Activated CD8-positive, alpha-beta T cell treated with anti-CD3 and anti-CD28 coated beads for 36 hours (primary cell): ENCODE measurements at regions of chr14 and their contacts with region 1.

Region 1: DNA sequence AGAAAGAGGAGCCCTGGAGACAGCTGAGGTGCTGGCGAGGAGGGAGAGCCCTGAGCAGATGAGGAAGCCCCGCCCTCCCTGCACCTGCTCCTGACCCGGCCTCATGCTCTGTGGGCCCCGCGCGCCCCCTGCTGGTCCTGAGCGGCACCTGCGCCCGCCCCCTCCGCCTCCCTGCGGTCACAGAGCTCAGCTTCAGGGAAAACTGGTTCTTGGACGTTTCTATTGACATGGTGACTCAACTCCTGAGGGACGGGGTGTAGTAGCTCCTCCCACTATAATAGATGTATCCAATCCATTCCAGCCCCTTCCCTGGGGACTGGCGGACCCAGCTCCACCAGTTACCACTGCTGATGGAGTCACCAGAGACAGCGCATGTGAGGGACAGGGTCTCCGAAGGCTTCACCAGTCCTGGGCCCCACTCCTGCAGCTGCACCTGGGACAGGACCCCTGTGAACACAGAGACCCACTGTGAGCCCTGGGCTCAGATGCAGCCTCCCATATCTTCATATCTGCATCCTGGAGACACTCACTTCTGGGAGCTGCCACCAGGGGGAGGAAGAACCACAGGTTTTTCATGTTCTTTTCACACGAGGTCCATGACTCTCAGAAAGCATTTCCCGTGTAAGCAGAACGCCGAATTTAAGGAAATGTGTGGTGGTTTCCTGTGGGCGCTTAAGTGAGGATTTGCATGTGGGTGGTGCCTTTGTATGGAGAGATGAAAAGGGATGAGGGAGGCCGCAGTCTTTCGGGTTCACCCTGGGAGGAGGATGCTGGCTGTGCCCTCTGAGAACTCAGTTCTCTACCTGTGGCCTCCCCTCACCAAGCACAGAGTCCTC is 1346.4 kb downstream of the TMEM121 start:
- DNase-seq: peak; percentile 95
- ATAC-seq: peak; percentile 92
- H3K4me3 Mint-ChIP-seq: peak overlapping the region; percentile 30
- H3K27ac Mint-ChIP-seq: peak overlapping the region; percentile 8
- H3K4me1 Mint-ChIP-seq: peaks cover 15% of the 10 kb centered on the region
- H3K27me3 Mint-ChIP-seq: peaks cover 25% of the 10 kb centered on the region
- CTCF ChIP-seq: peak; percentile 83

Region 2: GRCh38 chr14:106790189-106791036 is 82.4 kb before region 1 on chr14:
- CTCF ChIA-PET with region 1: interaction called, 10 read pairs
- POLR2A ChIA-PET with region 1: no interaction called
- intact Hi-C with region 1: no loop called
- DNase-seq: peak; percentile 92
- ATAC-seq: peak; percentile 92
- H3K4me3 Mint-ChIP-seq: no peak overlapping the region
- H3K27ac Mint-ChIP-seq: no peak overlapping the region
- H3K4me1 Mint-ChIP-seq: peaks cover 8% of the 10 kb centered on the region
- H3K27me3 Mint-ChIP-seq: peaks cover 4% of the 10 kb centered on the region
- CTCF ChIP-seq: peak; percentile 90

Region 3: DNA sequence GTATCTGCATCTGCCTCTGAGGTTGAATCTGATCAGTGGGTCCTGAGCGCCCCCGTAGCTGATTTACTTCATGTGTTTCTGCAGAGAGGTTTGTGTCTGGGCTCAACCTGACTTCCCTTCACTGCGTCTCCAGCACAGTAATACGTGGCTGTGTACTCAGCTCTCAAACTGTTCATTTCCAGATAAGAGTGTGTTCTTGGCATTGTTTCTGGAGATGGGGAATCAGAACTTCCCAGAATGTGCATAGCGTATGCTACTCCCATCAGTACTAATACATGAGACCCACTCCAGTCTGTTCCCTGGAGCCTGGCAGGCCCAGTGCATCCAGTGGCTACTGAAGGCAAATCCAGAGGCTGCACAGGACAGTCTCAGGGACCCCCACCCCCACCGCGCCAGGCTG is 49.3 kb before region 1 on chr14:
- CTCF ChIA-PET with region 1: interaction called, 13 read pairs
- POLR2A ChIA-PET with region 1: no interaction called
- intact Hi-C with region 1: no loop called
- DNase-seq: no peak
- ATAC-seq: no peak
- H3K4me3 Mint-ChIP-seq: no peak overlapping the region
- H3K27ac Mint-ChIP-seq: no peak overlapping the region
- H3K4me1 Mint-ChIP-seq: peaks cover 1% of the 10 kb centered on the region
- H3K27me3 Mint-ChIP-seq: peaks cover 9% of the 10 kb centered on the region
- CTCF ChIP-seq: no peak

Region 4: DNA sequence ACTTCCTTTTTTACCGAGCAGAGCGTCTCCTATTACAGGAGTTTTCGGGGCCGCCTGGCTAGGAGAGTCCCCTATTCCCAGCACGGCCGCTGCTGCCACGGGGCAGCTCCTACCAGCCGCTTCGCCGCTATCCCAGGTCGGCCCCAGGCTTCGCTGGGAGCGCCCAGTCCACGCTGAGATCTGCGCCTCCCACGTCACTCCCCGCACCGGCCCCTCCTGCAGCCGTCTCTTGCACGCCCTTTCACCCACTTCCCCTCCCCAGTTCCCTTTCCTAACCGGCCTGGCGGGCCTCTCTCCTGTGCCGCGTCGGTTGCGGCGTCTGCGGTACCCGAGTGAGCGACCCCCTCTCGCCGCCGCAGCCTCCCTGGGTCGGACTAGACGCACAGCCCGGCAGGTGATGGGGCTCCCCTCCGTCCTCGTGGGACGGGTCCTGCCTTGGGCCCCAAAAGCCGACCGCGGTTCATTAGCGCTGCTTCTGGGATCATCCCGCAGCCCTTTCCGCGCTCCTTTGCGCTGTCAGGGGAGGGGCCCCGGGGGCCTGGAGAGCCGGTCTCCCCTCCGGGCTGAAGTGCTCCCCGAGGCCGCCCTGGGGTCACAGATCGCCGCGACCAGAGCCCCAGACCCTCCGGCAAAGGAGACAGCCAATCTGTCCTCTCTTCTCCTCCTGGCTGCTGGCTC is 28.1 kb before region 1 on chr14:
- CTCF ChIA-PET with region 1: interaction called, 298 read pairs
- POLR2A ChIA-PET with region 1: interaction called, 4 read pairs
- intact Hi-C with region 1: no loop called
- DNase-seq: peak; percentile 65
- ATAC-seq: peak; percentile 45
- H3K4me3 Mint-ChIP-seq: peak overlapping the region; percentile 86
- H3K27ac Mint-ChIP-seq: peak overlapping the region; percentile 87
- H3K4me1 Mint-ChIP-seq: peaks cover 38% of the 10 kb centered on the region
- H3K27me3 Mint-ChIP-seq: no peaks in the 10 kb centered on the region
- CTCF ChIP-seq: no peak